Gastrocnemius medialis (tissue), 4 donors: ENCODE measurements at regions of chr7 and their contacts with region 1.

Region 1: GRCh38 chr7:16982640-16983350 is 101.0 kb upstream of the AGR3 start:
- DNase-seq: no peak
- ATAC-seq: no peak
- H3K4me3 ChIP-seq: no peak overlapping the region
- H3K27ac ChIP-seq: no peak overlapping the region
- H3K4me1 ChIP-seq: no peaks in the 10 kb centered on the region
- H3K27me3 ChIP-seq: no peaks in the 10 kb centered on the region
- CTCF ChIP-seq: peak in 3 of 5 experiments; percentile 17 to 62 (median 62)
- POLR2A ChIP-seq: no peak

Region 2: GRCh38 chr7:16695621-16696237 is 287.1 kb before region 1 on chr7:
- in situ Hi-C with region 1: no loop called
- intact Hi-C with region 1: no loop called
- DNase-seq: no peak
- ATAC-seq: no peak
- H3K4me3 ChIP-seq: no peak overlapping the region
- H3K27ac ChIP-seq: no peak overlapping the region
- H3K4me1 ChIP-seq: no peaks in the 10 kb centered on the region
- H3K27me3 ChIP-seq: no peaks in the 10 kb centered on the region
- CTCF ChIP-seq: peak in 4 of 5 experiments; percentile 14 to 48 (median 26)
- POLR2A ChIP-seq: no peak

Region 3: GRCh38 chr7:17530741-17531417 is 548.1 kb after region 1 on chr7:
- in situ Hi-C with region 1: no loop called
- intact Hi-C with region 1: loop called (anchors 10 kb)
- DNase-seq: no peak
- ATAC-seq: no peak
- H3K4me3 ChIP-seq: no peak overlapping the region
- H3K27ac ChIP-seq: no peak overlapping the region
- H3K4me1 ChIP-seq: no peaks in the 10 kb centered on the region
- H3K27me3 ChIP-seq: no peaks in the 10 kb centered on the region
- CTCF ChIP-seq: no peak
- POLR2A ChIP-seq: no peak

Region 4: GRCh38 chr7:17640730-17641377 is 658.1 kb after region 1 on chr7:
- in situ Hi-C with region 1: loop called in 2 of 4 experiments (anchors 10 to 25 kb)
- intact Hi-C with region 1: no loop called
- DNase-seq: no peak
- ATAC-seq: no peak
- H3K4me3 ChIP-seq: no peak overlapping the region
- H3K27ac ChIP-seq: no peak overlapping the region
- H3K4me1 ChIP-seq: no peaks in the 10 kb centered on the region
- H3K27me3 ChIP-seq: no peaks in the 10 kb centered on the region
- CTCF ChIP-seq: peak in 4 of 5 experiments; percentile 11 to 53 (median 26)
- POLR2A ChIP-seq: no peak